ENCODE measurements at regions of chr16 and their contacts with region 1.

Region 1: DNA sequence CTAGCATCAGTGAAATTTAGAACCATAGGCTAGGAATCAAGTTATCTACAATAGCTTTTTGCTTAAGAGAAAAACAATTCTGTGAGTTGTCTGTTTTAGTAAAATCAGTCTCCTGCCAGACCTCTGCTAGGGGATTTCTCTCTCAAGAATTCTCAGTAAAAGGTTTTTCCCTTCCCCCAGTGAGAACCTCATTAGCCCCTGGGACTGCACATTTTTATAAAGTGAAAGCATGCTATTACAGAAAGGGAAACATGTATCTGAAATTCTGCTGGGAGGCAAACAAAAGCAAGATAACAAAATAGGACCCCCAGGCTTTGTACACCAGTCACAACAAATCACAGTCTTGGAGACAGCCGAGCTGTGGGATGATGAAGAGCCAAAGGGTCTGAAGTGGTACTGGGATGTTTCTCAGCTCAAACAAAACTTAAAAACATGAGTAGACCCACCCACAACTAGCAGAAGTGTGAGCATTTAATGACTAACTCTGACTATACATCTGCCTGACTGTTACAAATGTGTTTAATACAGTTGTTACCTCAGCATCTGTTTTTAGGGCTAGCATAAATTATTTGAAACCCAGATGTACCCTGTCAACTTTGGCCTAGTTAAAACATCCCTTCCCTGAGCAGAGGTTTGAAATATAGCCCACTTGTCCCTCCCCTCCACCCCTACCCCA is 20.0 kb upstream of the GLG1 start:
- ATAC-seq: peak in 1 of 8 experiments; percentile 62
- H3K4me3 ChIP-seq: no peak overlapping the region
- H3K27ac ChIP-seq: no peak overlapping the region
- H3K4me1 ChIP-seq: no peaks in the 10 kb centered on the region

Region 2: GRCh38 chr16:74309789-74310781 is 316.8 kb before region 1 on chr16:
- in situ Hi-C with region 1: loop called in 1 of 9 experiments (anchors 25 kb)
- ATAC-seq: peak in 6 of 8 experiments; percentile 31 to 65 (median 48)
- H3K4me3 ChIP-seq: no peak overlapping the region
- H3K27ac ChIP-seq: no peak overlapping the region
- H3K4me1 ChIP-seq: no peaks in the 10 kb centered on the region